A549 (cell line): ENCODE measurements at regions of chr10 and their contacts with region 1.

Region 1: GRCh38 chr10:71727738-71728737 is 8.5 kb upstream of the C10orf105 start:
- DNase-seq: peak; percentile 19 to 42
- ATAC-seq: peak in 1 of 2 experiments; percentile 18; a peak in 2 of 6 replicates
- H3K4me3 ChIP-seq: no peak overlapping the region
- H3K27ac ChIP-seq: peak overlapping the region; percentile 38 to 79; a peak in 4 of 6 replicates
- H3K4me1 ChIP-seq: peaks cover 33% of the 10 kb centered on the region
- CTCF ChIP-seq: no peak
- EP300 ChIP-seq: no peak
- POLR2A ChIP-seq: no peak
- RAD21 ChIP-seq: no peak

Region 2: DNA sequence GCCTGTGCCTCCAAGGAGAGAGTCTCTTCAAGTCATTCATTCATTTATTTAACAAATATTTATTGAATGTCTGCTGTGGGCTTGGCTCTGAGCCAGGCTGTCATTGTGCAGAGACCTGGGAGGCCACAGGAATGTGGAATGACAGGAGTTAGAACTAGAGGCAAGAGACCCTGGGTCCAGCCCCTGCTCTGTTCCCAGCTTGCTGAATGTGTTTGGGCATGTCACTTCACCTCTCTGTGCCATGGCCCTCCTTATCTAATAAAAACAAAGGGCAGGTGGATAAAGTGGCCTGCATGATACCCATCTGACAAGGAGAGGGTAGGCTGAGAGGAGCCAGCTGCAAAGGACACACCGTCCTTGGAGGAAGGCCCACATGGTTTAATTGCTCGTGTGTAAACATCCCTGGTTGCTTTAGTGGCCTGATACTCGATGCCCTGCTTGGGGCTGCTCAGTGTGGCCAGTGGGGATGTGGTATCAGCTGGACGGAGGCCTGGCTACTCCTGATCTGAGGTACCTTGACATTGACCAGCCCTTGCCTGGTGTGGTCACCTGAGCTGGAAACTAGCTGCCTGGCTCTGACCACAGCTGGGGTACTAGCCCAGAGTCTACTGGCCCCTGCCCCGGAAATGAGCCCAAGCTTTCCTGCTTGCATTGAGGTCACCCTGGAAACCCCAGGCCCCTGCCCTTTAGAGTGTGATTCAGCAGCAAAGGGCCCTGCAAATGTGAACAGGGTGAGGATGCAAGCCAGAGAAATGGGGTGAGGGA is 215.1 kb before region 1 on chr10:
- CTCF ChIA-PET with region 1: no interaction called
- POLR2A ChIA-PET with region 1: no interaction called
- DNase-seq: no peak
- ATAC-seq: no peak
- H3K4me3 ChIP-seq: no peak overlapping the region
- H3K27ac ChIP-seq: no peak overlapping the region
- H3K4me1 ChIP-seq: no peaks in the 10 kb centered on the region
- CTCF ChIP-seq: no peak
- EP300 ChIP-seq: no peak
- POLR2A ChIP-seq: no peak
- RAD21 ChIP-seq: no peak

Region 3: GRCh38 chr10:71531485-71532446 is 196.3 kb before region 1 on chr10:
- CTCF ChIA-PET with region 1: no interaction called
- POLR2A ChIA-PET with region 1: no interaction called
- DNase-seq: no peak
- ATAC-seq: no peak
- H3K4me3 ChIP-seq: no peak overlapping the region
- H3K27ac ChIP-seq: no peak overlapping the region
- H3K4me1 ChIP-seq: no peaks in the 10 kb centered on the region
- CTCF ChIP-seq: no peak
- EP300 ChIP-seq: no peak
- POLR2A ChIP-seq: no peak
- RAD21 ChIP-seq: no peak

Region 4: GRCh38 chr10:71671994-71672946 is 55.8 kb before region 1 on chr10:
- CTCF ChIA-PET with region 1: no interaction called
- POLR2A ChIA-PET with region 1: no interaction called
- DNase-seq: no peak
- ATAC-seq: peak; percentile 22 to 29; a peak in 3 of 6 replicates
- H3K4me3 ChIP-seq: no peak overlapping the region
- H3K27ac ChIP-seq: no peak overlapping the region
- H3K4me1 ChIP-seq: no peaks in the 10 kb centered on the region
- CTCF ChIP-seq: no peak
- EP300 ChIP-seq: no peak
- POLR2A ChIP-seq: no peak
- RAD21 ChIP-seq: no peak

Region 5: DNA sequence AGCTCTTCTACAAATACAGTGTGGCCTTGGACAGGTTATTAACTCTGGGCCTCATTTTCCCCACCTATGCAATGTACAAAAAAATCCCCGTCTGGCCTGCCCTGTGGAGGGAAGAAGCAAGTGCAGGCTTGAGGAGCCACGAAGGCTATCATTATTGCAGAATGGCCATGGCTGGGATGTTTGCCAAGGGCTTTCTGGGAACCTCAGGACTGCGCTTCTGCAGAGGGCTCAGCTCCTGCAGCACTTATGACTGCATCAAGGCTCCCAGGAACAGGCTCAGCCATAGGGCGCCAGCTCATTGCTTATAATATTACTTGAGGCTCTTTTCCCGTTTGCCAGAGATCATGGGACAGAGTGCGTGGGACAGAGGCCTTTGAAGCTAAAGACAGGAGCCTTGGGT is 12.0 kb after region 1 on chr10:
- CTCF ChIA-PET with region 1: interaction called, 16 read pairs
- POLR2A ChIA-PET with region 1: no interaction called
- DNase-seq: no peak
- ATAC-seq: no peak; a peak in 1 of 6 replicates
- H3K4me3 ChIP-seq: no peak overlapping the region
- H3K27ac ChIP-seq: no peak overlapping the region
- H3K4me1 ChIP-seq: no peaks in the 10 kb centered on the region
- CTCF ChIP-seq: no peak
- EP300 ChIP-seq: no peak
- POLR2A ChIP-seq: no peak
- RAD21 ChIP-seq: no peak